Activated naive CD8-positive, alpha-beta T cell treated with anti-CD3 and anti-CD28 coated beads, Interleukin-2, amount 10 ng/mL, durations not matched to agents 7 days and 5 days (primary cell): ENCODE measurements at regions of chr2 and their contacts with region 1.

Region 1: DNA sequence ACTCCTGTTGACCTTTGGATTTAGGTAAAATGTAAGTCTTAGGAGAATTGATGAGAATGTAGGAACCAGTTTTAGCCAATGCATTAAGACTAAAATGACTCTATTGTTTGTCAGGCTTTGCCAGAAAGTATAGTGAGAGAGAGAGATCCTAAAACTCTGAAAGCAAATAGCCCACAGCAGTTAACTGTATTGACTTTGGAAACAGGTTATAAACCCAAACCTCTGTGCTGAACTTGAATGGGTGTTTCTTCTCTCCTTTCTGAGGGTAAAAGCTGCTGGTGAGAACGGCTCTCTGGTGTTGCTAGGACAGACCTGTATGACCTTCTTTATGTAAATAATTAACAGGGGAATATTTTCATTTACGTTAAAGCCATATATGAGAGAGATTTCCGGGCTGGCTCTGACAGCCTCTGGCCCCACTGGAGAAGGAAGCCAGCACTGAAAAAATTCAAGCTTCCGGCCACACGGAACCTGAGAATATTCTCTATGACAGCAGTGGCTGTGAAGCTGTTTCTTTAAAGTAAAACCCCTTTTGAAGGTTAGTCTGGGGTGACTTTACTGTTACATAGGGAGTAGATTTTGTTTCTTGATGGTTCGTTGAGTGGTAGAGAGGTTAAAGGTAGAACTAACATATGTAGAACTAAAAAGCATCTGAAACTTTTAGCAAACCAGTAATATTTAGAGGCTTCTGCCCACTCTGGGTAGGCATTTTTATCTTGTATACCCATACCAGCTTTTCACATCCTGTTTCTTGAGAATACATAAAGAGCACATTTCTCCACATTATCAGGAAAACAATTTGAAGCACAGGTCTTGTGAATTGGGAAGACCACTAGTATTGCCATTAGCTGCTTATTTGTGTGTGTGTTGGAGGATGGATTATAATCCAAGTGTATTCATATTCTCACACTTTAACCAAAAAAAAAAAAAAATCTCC is 123.8 kb downstream of the SPTBN1 start:
- DNase-seq: no peak
- ATAC-seq: peak; percentile 85
- H3K4me3 Mint-ChIP-seq: peak overlapping the region; percentile 78
- H3K27ac Mint-ChIP-seq: peak overlapping the region; percentile 93
- H3K4me1 Mint-ChIP-seq: peaks cover 83% of the 10 kb centered on the region
- H3K27me3 Mint-ChIP-seq: no peaks in the 10 kb centered on the region

Region 2: DNA sequence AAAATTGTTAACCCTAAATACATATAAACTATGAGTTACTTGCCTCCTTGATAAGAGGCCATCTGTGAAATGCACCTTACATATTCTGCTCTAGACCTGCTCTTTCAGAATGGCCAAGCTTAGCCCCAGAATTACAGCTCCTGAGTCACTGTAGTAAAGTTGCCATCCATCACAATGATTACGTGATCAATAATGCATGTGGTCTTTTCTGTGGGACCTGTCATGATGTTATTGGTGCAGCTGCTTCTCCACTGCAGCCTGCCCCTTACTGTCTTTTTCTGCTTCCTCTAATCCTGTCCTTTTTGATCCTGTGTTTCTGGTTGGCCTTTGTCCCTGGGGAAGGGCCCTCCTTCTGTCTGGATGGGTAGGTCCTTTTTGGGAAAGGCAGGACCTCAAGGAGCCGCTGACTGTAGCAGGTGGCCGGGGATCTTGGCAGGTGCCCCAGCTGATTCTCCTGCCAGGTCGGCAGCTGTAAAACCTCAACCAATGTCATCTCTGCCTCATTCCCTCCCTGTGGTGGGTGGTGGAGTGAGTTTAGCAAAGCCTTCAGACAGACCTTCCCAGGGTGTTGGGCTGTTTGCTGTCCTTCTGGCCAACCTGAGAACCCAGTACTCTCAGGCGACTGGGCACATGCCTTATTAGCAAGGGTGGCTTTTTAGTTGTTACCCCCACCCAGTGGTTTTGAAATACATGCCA is 17.3 kb after region 1 on chr2:
- POLR2A ChIA-PET with region 1: interaction called, 21 read pairs
- DNase-seq: peak; percentile 46
- ATAC-seq: peak; percentile 41
- H3K4me3 Mint-ChIP-seq: peak overlapping the region; percentile 78
- H3K27ac Mint-ChIP-seq: peak overlapping the region; percentile 97
- H3K4me1 Mint-ChIP-seq: peaks cover 77% of the 10 kb centered on the region
- H3K27me3 Mint-ChIP-seq: no peaks in the 10 kb centered on the region